ENCODE measurements at regions of chr9 and their contacts with region 1.

Region 1: GRCh38 chr9:122350638-122351355 is 20.0 kb upstream of the PTGS1 start:
- DNase-seq: peak; percentile 72
- H3K4me3 ChIP-seq: no peak overlapping the region
- H3K27ac ChIP-seq: no peak overlapping the region
- H3K4me1 ChIP-seq: no peaks in the 10 kb centered on the region
- H3K27me3 ChIP-seq: no peaks in the 10 kb centered on the region
- CTCF ChIP-seq: peak; percentile 96 to 98 (median 97)
- POLR2A ChIP-seq: no peak

Region 2: GRCh38 chr9:122099271-122099869 is 251.4 kb before region 1 on chr9:
- intact Hi-C with region 1: loop called (anchors 2 kb)
- DNase-seq: peak; percentile 71
- H3K4me3 ChIP-seq: no peak overlapping the region
- H3K27ac ChIP-seq: no peak overlapping the region
- H3K4me1 ChIP-seq: no peaks in the 10 kb centered on the region
- H3K27me3 ChIP-seq: no peaks in the 10 kb centered on the region
- CTCF ChIP-seq: peak; percentile 80 to 88 (median 82)
- POLR2A ChIP-seq: no peak

Region 3: GRCh38 chr9:122286764-122287163 is 64.0 kb before region 1 on chr9:
- intact Hi-C with region 1: no loop called
- DNase-seq: no peak
- H3K4me3 ChIP-seq: no peak overlapping the region
- H3K27ac ChIP-seq: no peak overlapping the region
- H3K4me1 ChIP-seq: no peaks in the 10 kb centered on the region
- H3K27me3 ChIP-seq: no peaks in the 10 kb centered on the region
- CTCF ChIP-seq: no peak
- POLR2A ChIP-seq: no peak

Region 4: DNA sequence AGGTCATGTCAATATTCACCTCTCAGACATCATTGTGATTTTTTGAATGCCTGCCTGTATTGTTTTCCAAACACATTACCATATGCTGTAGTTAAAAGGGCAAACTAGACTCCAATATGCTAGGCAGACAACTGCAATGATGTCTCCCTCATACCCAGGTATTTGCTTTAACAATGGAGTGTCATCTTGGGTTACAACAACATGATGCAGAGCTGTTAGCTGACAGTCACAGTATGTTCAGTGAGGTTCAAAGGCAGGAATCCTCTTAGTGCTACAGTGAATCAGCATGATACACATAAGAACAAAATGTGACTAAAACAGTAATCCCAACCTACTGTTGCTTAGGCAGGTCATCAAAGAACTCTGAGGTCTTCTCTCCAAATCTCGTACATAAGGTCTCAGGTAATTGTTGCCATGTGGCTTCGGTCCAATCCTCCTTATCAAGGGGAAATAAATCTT is 102.9 kb after region 1 on chr9:
- intact Hi-C with region 1: loop called (anchors 5 kb)
- DNase-seq: no peak
- H3K4me3 ChIP-seq: no peak overlapping the region
- H3K27ac ChIP-seq: no peak overlapping the region
- H3K4me1 ChIP-seq: no peaks in the 10 kb centered on the region
- H3K27me3 ChIP-seq: no peaks in the 10 kb centered on the region
- CTCF ChIP-seq: no peak
- POLR2A ChIP-seq: no peak

Region 5: GRCh38 chr9:123389070-123389469 is 1038.3 kb after region 1 on chr9:
- intact Hi-C with region 1: no loop called
- DNase-seq: no peak
- H3K4me3 ChIP-seq: no peak overlapping the region
- H3K27ac ChIP-seq: no peak overlapping the region
- H3K4me1 ChIP-seq: no peaks in the 10 kb centered on the region
- H3K27me3 ChIP-seq: no peaks in the 10 kb centered on the region
- CTCF ChIP-seq: no peak
- POLR2A ChIP-seq: no peak

Measured in prostate gland (tissue), 2 donors.